Gastrocnemius medialis (tissue), 4 donors: ENCODE measurements at regions of chr5 and their contacts with region 1.

Region 1: GRCh38 chr5:67003935-67004729 is 192.5 kb downstream of the CD180 start:
- DNase-seq: peak; percentile 75 to 87
- ATAC-seq: peak; percentile 83 to 87
- H3K4me3 ChIP-seq: peak overlapping the region; percentile 58 to 82 (median 74)
- H3K27ac ChIP-seq: peak overlapping the region; percentile 85 to 95 (median 91)
- H3K4me1 ChIP-seq: peaks cover 12 to 46% of the 10 kb centered on the region in 2 donors
- H3K27me3 ChIP-seq: no peaks in the 10 kb centered on the region
- CTCF ChIP-seq: no peak
- POLR2A ChIP-seq: peak; percentile 61 to 87

Region 2: GRCh38 chr5:67050136-67050535 is 46.0 kb after region 1 on chr5:
- in situ Hi-C with region 1: no loop called
- intact Hi-C with region 1: loop called (anchors 5 kb)
- DNase-seq: peak in 1 of 2 donors; percentile 63
- ATAC-seq: peak; percentile 43 to 85
- H3K4me3 ChIP-seq: no peak overlapping the region
- H3K27ac ChIP-seq: peak overlapping the region; percentile 32 to 70 (median 64)
- H3K4me1 ChIP-seq: peaks cover 34 to 36% of the 10 kb centered on the region in 2 donors
- H3K27me3 ChIP-seq: no peaks in the 10 kb centered on the region
- CTCF ChIP-seq: no peak
- POLR2A ChIP-seq: no peak

Region 3: GRCh38 chr5:67156976-67157583 is 152.9 kb after region 1 on chr5:
- in situ Hi-C with region 1: no loop called
- intact Hi-C with region 1: loop called (anchors 5 kb)
- DNase-seq: no peak
- ATAC-seq: no peak
- H3K4me3 ChIP-seq: no peak overlapping the region
- H3K27ac ChIP-seq: no peak overlapping the region
- H3K4me1 ChIP-seq: peaks cover 17 to 19% of the 10 kb centered on the region in 2 donors
- H3K27me3 ChIP-seq: no peaks in the 10 kb centered on the region
- CTCF ChIP-seq: peak; percentile 66 to 75 (median 69)
- POLR2A ChIP-seq: no peak